ENCODE measurements at regions of chr2 and their contacts with region 1.

Region 1: GRCh38 chr2:102013206-102014040 is 21.7 kb downstream of the IL1R2 start:
- DNase-seq: no peak
- H3K4me3 Mint-ChIP-seq: no peak overlapping the region
- H3K27ac Mint-ChIP-seq: no peak overlapping the region
- H3K4me1 Mint-ChIP-seq: peaks cover 7% of the 10 kb centered on the region
- H3K27me3 Mint-ChIP-seq: no peaks in the 10 kb centered on the region

Region 2: GRCh38 chr2:101974663-101975062 is 38.8 kb before region 1 on chr2:
- CTCF ChIA-PET with region 1: no interaction called
- POLR2A ChIA-PET with region 1: no interaction called
- DNase-seq: no peak
- H3K4me3 Mint-ChIP-seq: no peak overlapping the region
- H3K27ac Mint-ChIP-seq: no peak overlapping the region
- H3K4me1 Mint-ChIP-seq: peaks cover 12% of the 10 kb centered on the region
- H3K27me3 Mint-ChIP-seq: no peaks in the 10 kb centered on the region

Region 3: DNA sequence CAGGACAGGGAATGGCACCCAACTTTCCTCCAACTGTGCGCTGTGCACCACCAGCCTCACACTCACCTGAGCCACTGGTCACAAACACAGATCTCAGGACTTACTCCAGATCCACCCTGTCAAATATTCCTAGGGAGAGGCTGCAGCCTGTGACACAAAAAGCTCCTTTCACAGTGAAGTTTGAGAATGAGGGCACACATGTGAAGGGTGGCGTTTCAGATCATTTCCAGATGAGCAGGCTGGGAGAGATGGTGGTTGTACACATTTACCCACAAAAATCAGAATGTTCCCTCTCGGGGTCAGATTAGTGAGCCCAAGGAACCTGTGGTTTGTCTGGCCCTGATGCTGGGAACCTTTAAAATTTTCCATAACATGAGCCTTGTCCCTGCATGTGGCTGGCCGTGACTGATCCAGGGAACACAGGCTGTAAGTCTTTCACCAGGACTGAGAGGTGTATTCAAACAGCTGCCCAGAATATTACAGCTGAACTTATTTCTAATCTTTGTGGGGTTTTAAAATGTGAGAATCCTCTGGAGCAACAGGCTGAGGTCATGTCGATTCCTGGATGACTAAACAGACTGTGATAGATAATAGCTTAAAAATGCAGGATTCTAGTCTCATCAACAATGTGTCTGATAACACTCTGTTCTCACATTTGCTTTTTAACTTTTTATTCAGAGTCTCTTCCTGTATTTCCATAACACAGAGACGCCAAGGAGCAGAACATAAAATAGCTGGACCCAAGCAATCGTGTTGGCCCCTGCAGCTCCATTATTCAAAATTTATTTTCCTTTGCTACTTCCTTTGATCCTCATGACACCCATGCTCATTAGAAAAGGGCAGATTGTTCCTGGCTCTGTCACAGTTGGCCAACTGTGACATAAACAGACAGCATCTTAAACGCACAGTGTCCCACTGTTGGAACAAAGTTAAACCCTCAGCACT is 13.9 kb after region 1 on chr2:
- CTCF ChIA-PET with region 1: interaction called, 11 read pairs
- POLR2A ChIA-PET with region 1: no interaction called
- DNase-seq: no peak
- H3K4me3 Mint-ChIP-seq: no peak overlapping the region
- H3K27ac Mint-ChIP-seq: no peak overlapping the region
- H3K4me1 Mint-ChIP-seq: peaks cover 8% of the 10 kb centered on the region
- H3K27me3 Mint-ChIP-seq: no peaks in the 10 kb centered on the region